Sigmoid colon (tissue), 7 donors: ENCODE measurements at regions of chr11 and their contacts with region 1.

Region 1: GRCh38 chr11:72631806-72632731 is 42.2 kb downstream of the PDE2A start:
- DNase-seq: peak; percentile 85
- H3K4me3 ChIP-seq: no peak overlapping the region
- H3K27ac ChIP-seq: peak overlapping the region; percentile 50 to 92 (median 91)
- H3K4me1 ChIP-seq: peaks cover 0 to 90% (median 75%) of the 10 kb centered on the region in 4 donors
- H3K27me3 ChIP-seq: no peaks in the 10 kb centered on the region
- CTCF ChIP-seq: no peak
- EP300 ChIP-seq: no peak
- POLR2A ChIP-seq: no peak

Region 2: GRCh38 chr11:72617080-72617762 is 14.8 kb before region 1 on chr11:
- intact Hi-C with region 1: loop called (anchors 2 kb)
- DNase-seq: peak; percentile 93
- H3K4me3 ChIP-seq: peak overlapping the region in 2 of 4 donors; percentile 14 to 18
- H3K27ac ChIP-seq: peak overlapping the region; percentile 72 to 95 (median 90)
- H3K4me1 ChIP-seq: peaks cover 0 to 61% (median 60%) of the 10 kb centered on the region in 4 donors
- H3K27me3 ChIP-seq: no peaks in the 10 kb centered on the region
- CTCF ChIP-seq: no peak
- EP300 ChIP-seq: no peak
- POLR2A ChIP-seq: peak in 1 of 2 donors; percentile 20

Region 3: DNA sequence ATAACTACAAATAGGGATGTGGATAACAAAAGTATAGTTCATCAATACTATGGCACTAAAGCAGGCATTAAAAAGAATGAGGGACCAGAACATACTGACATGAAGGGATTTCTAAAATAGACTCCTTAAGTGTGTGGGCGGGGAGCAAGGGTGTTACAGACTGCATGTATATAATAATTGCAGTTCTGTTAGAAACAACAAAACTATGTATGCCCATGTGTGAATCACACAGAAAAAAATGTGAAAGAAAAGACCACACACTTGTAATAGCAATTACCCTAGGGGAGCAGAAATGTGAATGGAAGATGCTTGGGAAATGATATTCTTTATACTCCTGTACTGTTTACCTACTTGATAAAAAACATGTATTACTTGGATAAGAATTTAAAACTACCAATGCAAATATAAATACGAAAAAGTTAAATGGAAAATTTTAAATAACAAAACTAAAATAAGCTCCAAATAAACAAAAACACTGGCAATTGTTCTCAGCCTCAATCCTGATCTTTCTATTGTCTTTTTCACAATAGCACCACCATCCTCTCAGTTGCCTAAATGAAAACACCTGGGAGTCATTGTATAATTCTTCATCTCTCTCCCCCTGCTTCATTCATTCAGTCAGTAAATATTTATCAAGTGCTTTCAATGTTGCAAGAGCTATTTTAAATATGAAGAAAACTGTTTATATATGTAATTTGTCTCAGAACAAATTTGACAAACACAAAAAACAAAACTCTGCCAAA is 380.2 kb after region 1 on chr11:
- intact Hi-C with region 1: no loop called
- DNase-seq: no peak
- H3K4me3 ChIP-seq: no peak overlapping the region
- H3K27ac ChIP-seq: no peak overlapping the region
- H3K4me1 ChIP-seq: no peaks in the 10 kb centered on the region
- H3K27me3 ChIP-seq: no peaks in the 10 kb centered on the region
- CTCF ChIP-seq: no peak
- EP300 ChIP-seq: no peak
- POLR2A ChIP-seq: no peak

Region 4: GRCh38 chr11:73335204-73335923 is 703.3 kb after region 1 on chr11:
- intact Hi-C with region 1: loop called (anchors 10 kb)
- DNase-seq: peak; percentile 91
- H3K4me3 ChIP-seq: no peak overlapping the region
- H3K27ac ChIP-seq: peak overlapping the region; percentile 77 to 90 (median 81)
- H3K4me1 ChIP-seq: peaks cover 0 to 98% (median 82%) of the 10 kb centered on the region in 4 donors
- H3K27me3 ChIP-seq: no peaks in the 10 kb centered on the region
- CTCF ChIP-seq: peak; percentile 86 to 99 (median 90)
- EP300 ChIP-seq: no peak
- POLR2A ChIP-seq: no peak